Right cardiac atrium (tissue), 5 donors: ENCODE measurements at regions of chr22 and their contacts with region 1.

Region 1: GRCh38 chr22:29040385-29041275 is 21.0 kb downstream of the C22orf31 start:
- DNase-seq: peak in 2 of 3 donors; percentile 53 to 81
- ATAC-seq: peak; percentile 87
- H3K4me3 ChIP-seq: no peak overlapping the region
- H3K27ac ChIP-seq: no peak overlapping the region
- H3K4me1 ChIP-seq: no peaks in the 10 kb centered on the region
- H3K27me3 ChIP-seq: no peaks in the 10 kb centered on the region

Region 2: DNA sequence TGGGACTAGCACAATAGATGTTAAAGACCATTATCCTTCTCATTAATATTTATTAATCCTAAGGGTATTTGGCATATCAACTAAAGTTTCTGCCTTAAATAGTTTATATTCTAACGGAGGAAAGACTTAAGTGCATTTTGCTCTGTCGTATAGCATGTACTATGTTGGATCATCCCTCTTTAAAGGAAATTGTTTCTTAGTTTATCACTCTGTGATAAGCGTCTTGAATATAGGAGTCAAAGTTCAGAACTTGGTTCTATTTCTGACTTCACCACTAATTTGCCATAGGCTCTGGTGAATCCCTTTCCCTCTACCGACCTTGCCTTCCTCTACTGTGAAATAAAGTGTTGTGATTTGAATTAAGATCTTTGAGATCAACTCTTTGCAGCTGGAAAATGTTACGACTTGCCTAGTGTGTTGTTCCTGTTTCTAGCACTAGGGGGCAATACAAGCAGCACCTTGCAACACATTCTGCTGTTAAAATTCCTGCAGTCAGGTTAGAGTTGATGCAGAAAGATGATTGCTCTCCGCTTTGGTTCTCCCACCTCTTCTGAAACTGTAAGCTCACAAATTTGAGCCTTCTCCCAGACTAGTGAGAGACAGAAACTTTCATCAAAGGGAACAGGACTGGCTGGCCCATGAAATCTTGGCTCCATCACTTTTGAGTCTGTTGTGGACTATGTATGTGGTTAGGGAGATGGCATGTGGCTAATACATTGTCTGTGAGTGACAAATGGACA is 185.1 kb before region 1 on chr22:
- intact Hi-C with region 1: loop called (anchors 1 to 5 kb)
- DNase-seq: no peak
- ATAC-seq: peak; percentile 66 to 67
- H3K4me3 ChIP-seq: no peak overlapping the region
- H3K27ac ChIP-seq: no peak overlapping the region
- H3K4me1 ChIP-seq: no peaks in the 10 kb centered on the region
- H3K27me3 ChIP-seq: no peaks in the 10 kb centered on the region

Region 3: DNA sequence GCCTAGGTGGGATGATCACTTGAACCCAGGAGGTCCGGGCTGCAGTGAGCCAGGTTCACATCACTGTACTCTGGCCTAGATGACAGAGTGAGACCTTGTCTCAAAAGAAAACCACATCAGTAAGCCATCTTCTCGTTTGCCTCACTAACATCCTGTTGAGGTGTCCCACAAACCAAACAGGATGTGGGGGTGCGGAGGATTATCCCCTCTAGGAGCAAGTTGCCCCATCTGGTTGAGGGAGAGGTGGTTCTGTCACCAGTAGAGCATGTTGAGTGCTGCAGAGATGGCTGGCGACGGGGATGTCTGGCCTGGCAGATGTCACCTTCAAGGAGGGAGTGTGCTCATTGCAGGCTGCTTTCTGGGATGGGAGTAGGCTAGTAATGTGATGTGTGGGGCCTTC is 84.8 kb before region 1 on chr22:
- intact Hi-C with region 1: no loop called
- DNase-seq: no peak
- ATAC-seq: no peak
- H3K4me3 ChIP-seq: no peak overlapping the region
- H3K27ac ChIP-seq: no peak overlapping the region
- H3K4me1 ChIP-seq: peaks cover 19% of the 10 kb centered on the region
- H3K27me3 ChIP-seq: no peaks in the 10 kb centered on the region

Region 4: DNA sequence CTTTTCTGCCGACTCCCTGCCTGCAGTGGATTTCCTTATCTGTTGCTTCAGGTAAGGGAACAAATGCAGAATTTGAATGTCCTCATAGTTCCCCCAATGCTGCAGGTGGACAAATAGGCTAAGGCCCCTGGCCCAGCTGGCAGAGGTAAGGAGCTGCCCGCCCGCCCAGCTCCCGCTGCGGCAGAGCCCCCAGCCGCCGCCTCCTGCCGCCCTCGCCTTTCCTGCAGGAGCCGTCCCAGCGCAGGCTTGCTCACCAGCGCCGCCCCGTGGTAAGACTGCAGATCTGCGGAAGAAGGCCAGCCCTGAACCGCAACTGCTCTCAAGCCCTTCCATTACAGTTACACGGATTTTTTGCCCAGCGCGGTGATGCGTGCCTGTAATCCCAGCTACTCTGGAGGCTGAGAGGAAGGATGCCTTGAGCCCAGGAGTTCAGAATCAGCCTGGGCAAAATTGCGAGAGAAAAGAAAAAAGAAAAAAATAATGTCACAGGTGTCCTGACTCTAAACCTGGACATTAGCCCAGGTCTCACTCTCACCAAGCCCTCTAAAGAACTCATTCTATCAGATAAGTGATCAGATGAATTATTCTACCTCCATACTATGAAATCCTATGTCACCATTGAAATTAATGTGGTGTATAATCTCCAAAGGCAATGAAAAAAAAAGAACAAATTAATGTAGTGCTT is 113.9 kb after region 1 on chr22:
- intact Hi-C with region 1: loop called in 1 of 4 experiments (anchors 10 kb)
- DNase-seq: peak; percentile 74 to 92 (median 87)
- ATAC-seq: peak; percentile 69 to 70
- H3K4me3 ChIP-seq: peak overlapping the region; percentile 7
- H3K27ac ChIP-seq: no peak overlapping the region
- H3K4me1 ChIP-seq: peaks cover 5% of the 10 kb centered on the region
- H3K27me3 ChIP-seq: no peaks in the 10 kb centered on the region